IMR-90 (cell line): ENCODE measurements at regions of chr14 and their contacts with region 1.

Region 1: DNA sequence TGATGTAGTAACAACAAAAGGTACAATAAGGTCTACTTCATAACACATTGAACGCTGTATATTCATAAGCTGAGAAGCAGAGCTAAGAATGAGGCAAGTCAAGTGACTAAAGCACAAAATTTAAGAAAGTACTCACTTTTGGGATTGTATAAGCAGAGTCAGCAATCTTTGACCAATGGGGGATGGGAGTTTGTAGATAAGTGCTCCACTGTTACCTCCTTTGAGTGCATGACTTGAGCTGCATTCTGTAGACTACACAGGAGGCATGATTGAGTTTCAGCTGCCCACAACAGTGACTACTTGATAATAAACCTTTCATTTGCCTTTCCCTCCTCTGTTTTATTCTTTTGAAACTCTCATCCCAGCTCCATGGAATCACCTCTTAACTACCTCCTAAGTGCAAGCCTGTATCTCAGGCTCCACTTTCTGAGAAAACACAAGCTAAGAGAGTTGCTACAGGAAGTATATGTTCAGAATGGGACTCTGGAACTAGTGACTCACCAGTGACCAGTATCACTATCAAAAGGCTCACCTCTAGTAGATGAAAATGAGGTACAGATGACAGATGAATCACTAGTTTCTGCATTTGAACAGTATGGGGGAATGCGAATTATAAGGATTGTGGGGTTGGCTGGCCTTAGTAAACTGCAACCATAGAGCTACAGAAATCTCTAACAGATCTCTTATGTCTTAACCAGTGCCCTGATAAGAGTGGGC is 49.2 kb downstream of the SLC35F4 start:
- DNase-seq: no peak
- ATAC-seq: no peak
- H3K4me3 ChIP-seq: no peak overlapping the region
- H3K27ac ChIP-seq: no peak overlapping the region
- H3K4me1 ChIP-seq: no peaks in the 10 kb centered on the region
- H3K27me3 ChIP-seq: no peaks in the 10 kb centered on the region
- CTCF ChIP-seq: no peak
- POLR2A ChIP-seq: no peak
- RAD21 ChIP-seq: no peak

Region 2: DNA sequence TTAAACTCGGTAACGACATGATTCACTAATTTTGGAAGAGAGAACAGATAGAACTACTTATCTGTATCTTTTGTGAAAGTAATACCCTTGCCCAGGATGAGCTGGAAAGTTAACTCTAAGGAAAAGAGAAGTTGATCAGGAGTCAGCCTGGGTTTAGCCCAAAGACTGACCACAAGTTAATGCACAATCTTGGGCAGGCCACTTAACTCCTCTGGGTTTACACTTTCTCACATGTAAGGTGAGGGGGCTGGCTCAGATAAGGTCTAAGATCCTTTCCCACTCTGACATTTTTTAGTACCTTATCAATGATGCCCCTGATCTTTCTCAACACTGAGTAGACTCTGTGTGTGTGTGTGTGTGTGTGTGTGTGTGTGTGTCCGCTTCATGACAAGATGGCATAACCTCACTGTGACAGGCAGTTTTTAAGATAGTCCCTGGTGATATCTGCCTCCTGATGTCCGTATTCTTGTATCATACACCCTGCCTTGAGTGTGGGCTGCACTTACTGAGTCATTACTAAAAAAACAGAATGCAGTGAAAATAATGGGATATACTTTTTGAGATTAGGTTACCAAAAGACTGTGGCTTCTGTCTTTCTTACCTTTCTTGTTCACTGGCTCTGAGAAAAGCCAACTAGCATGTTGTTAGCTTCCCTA is 266.8 kb before region 1 on chr14:
- CTCF ChIA-PET with region 1: no interaction called
- POLR2A ChIA-PET with region 1: interaction called, 14 read pairs
- dilution Hi-C with region 1: no loop called
- in situ Hi-C with region 1: no loop called
- intact Hi-C with region 1: no loop called
- DNase-seq: no peak
- ATAC-seq: no peak
- H3K4me3 ChIP-seq: no peak overlapping the region
- H3K27ac ChIP-seq: no peak overlapping the region
- H3K4me1 ChIP-seq: no peaks in the 10 kb centered on the region
- H3K27me3 ChIP-seq: no peaks in the 10 kb centered on the region
- CTCF ChIP-seq: no peak
- POLR2A ChIP-seq: no peak
- RAD21 ChIP-seq: no peak

Region 3: DNA sequence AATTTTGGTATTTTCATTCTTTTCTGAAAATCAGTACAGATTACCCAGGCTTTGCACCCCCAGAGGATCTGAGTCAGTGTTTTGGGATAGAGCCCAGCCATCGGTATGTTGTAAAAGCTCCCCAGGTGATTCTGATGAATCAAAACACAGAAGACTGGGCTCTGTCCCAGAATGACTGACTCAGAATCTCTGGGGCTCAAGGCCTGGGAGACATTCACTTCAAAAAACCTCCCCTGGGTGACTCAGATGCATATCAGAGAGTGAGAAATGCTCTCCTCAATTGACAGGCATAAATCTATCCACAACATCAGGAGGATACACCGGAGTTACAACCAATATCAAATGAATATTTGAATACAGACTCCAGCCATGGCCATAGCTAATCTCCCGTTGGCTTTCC is 16.6 kb after region 1 on chr14:
- CTCF ChIA-PET with region 1: no interaction called
- POLR2A ChIA-PET with region 1: no interaction called
- dilution Hi-C with region 1: no loop called
- in situ Hi-C with region 1: no loop called
- intact Hi-C with region 1: no loop called
- DNase-seq: peak; percentile 88
- ATAC-seq: peak; percentile 53
- H3K4me3 ChIP-seq: no peak overlapping the region
- H3K27ac ChIP-seq: no peak overlapping the region
- H3K4me1 ChIP-seq: no peaks in the 10 kb centered on the region
- H3K27me3 ChIP-seq: no peaks in the 10 kb centered on the region; the same call in 1 of the 2 replicates
- CTCF ChIP-seq: no peak
- POLR2A ChIP-seq: no peak
- RAD21 ChIP-seq: no peak